ENCODE measurements at regions of chr7 and their contacts with region 1.

Region 1: GRCh38 chr7:99918959-99919813 is at the start of gene TRIM4:
- DNase-seq: peak; percentile 92
- H3K4me3 Mint-ChIP-seq: peak within 1 kb of the TSS; percentile 94
- H3K27ac Mint-ChIP-seq: peak within 1 kb of the TSS; percentile 96
- H3K4me1 Mint-ChIP-seq: peaks cover 44% of the 10 kb centered on the region
- H3K27me3 Mint-ChIP-seq: no peaks in the 10 kb centered on the region
- total RNA-seq, gene TRIM4: 22.1 and 24.1 TPM in 2 replicates

Region 2: DNA sequence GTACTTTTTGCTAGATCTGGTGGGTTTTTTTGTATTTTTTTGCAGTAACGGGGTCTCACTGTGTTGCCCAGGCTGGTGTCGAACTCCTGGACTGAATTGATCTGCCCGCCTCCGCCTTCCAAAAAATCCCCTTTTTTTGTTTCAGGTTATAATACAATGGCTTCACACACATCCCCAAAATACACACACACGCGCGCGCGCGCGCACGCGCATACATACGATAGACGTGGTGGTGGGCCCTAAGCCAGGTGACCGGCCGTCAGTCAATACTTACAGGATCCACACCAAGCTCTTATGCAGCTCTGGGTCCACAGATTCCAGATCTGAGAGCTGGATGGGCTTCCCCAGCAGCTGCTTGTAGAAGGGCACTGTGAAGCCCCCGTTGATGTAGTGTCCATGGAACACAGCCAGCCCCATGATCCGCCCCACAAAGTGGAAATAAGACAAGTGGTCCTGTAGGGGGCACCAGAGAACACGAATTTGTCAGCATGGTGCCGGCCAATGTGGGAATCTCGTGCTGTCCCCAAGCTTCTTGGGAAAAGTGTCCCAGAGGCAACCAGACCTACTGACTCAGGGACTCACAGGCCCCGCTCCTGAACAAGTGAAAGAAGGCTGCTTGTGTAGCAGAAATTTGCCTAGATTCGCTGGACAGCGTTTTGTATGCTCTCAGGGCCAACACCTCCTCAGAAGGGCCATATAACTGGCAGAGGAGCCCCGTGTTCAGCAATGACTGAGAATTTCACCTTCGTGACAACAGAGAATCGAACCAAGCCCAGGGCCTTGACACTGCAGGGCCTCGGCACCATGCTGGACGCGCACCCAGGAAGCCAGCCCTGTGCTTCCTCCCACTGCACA is 878.9 kb before region 1 on chr7:
- intact Hi-C with region 1: no loop called
- DNase-seq: peak; percentile 38
- H3K4me3 Mint-ChIP-seq: no peak overlapping the region
- H3K27ac Mint-ChIP-seq: peak overlapping the region; percentile 58
- H3K4me1 Mint-ChIP-seq: peaks cover 4% of the 10 kb centered on the region
- H3K27me3 Mint-ChIP-seq: no peaks in the 10 kb centered on the region

Region 3: DNA sequence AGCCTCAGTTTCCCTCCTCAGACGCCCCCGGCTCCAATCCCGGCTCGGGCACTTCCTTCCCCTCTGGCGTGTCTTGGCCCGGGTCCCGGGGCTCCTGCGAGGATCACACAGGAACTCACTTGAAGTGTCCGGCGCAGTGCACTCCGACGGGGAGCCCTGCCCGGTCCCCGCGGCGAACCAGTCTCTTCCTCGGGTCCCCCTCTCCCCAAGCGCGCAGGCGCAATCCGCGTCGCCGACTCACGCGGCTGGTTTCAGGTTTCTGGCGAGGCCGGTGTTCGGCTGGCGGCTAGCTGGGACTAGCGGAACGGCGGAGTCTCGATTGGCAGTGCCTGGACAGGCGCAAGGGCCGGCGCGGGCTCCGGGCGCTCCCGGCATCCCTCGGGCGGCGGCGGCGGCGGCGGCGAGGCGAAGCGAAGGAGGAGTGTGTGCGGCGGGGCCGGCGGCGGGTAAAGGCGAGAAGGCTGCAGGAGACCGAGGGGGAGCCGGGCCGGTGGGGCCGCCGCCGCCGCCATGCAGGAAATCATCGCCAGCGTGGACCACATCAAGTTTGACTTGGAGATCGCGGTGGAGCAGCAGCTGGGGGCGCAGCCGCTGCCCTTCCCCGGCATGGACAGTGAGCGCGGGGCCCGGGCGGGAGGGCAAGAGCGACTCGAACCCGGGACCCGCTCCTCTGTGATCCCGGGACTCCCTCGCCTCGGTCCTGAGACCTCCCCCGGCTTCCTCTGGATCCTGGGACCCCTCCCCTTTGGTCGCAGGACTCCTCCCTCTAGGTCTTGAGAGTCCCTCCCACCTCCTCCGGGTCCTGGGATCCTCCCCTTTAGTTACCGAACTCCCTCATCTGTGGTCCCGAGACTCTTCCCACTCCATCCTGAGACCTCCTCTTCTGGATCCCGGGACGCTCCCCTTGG is 480.4 kb before region 1 on chr7 and contains the starts of genes CPSF4 and PTCD1:
- intact Hi-C with region 1: loop called (anchors 1 kb)
- DNase-seq: peak; percentile 91
- H3K4me3 Mint-ChIP-seq: peak within 1 kb of the TSS; percentile 98
- H3K27ac Mint-ChIP-seq: peak within 1 kb of the TSS; percentile 88
- H3K4me1 Mint-ChIP-seq: peaks cover 28% of the 10 kb centered on the region
- H3K27me3 Mint-ChIP-seq: no peaks in the 10 kb centered on the region
- total RNA-seq, gene CPSF4: 92.3 and 93.2 TPM in 2 replicates
- total RNA-seq, gene PTCD1: 13.7 and 16.0 TPM in 2 replicates

Region 4: GRCh38 chr7:99504603-99505323 is 414.4 kb before region 1 on chr7 and contains the start of gene ZKSCAN5:
- intact Hi-C with region 1: loop called (anchors 1 kb)
- DNase-seq: peak; percentile 96
- H3K4me3 Mint-ChIP-seq: peak within 1 kb of the TSS; percentile 90
- H3K27ac Mint-ChIP-seq: peak within 1 kb of the TSS; percentile 96
- H3K4me1 Mint-ChIP-seq: peaks cover 19% of the 10 kb centered on the region
- H3K27me3 Mint-ChIP-seq: no peaks in the 10 kb centered on the region
- total RNA-seq, gene ZKSCAN5: 8.0 and 8.1 TPM in 2 replicates

Region 5: GRCh38 chr7:99624484-99624883 is 294.7 kb before region 1 on chr7:
- intact Hi-C with region 1: loop called (anchors 2 kb)
- DNase-seq: peak; percentile 64
- H3K4me3 Mint-ChIP-seq: peak overlapping the region; percentile 85
- H3K27ac Mint-ChIP-seq: peak overlapping the region; percentile 98
- H3K4me1 Mint-ChIP-seq: peaks cover 61% of the 10 kb centered on the region
- H3K27me3 Mint-ChIP-seq: peaks cover 2% of the 10 kb centered on the region

Region 6: DNA sequence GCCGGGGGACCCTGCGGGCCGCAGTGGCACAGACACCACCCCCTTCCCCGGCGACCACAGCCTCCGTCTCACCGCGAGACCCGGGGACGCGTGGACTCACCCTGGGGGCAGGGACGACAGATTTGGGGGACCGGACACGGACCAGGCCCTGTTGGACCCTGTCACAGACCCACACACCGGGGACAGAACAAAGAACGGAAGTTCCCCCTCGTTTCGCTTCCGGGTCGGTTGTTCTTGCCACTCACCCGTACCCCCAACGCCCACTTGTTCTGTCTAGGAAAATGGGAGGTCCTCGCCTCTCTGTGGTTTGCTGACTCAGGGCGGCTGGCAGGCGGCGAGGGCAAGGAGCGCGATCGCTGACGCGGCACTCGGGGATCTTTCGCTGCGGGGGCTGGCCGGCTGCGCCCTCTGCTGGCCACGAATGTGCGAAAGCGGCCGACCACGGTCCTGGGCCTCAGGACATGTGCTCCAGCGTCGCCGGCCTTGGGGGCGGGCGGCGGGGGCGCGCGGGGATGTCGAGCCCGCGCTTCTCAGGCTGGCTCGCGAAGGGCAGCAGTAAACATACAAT is 162.4 kb after region 1 on chr7 and contains the start of gene ZNF3:
- intact Hi-C with region 1: loop called (anchors 1 kb)
- DNase-seq: peak; percentile 98
- H3K4me3 Mint-ChIP-seq: peak within 1 kb of the TSS; percentile 89
- H3K27ac Mint-ChIP-seq: peak within 1 kb of the TSS; percentile 92
- H3K4me1 Mint-ChIP-seq: peaks cover 31% of the 10 kb centered on the region
- H3K27me3 Mint-ChIP-seq: peaks cover 4% of the 10 kb centered on the region
- total RNA-seq, gene ZNF3: 24.6 and 26.1 TPM in 2 replicates

Region 7: GRCh38 chr7:100119062-100119700 is 200.0 kb after region 1 on chr7 and contains the starts of genes CNPY4 and TAF6:
- intact Hi-C with region 1: loop called (anchors 2 kb)
- DNase-seq: peak; percentile 90
- H3K4me3 Mint-ChIP-seq: peak within 1 kb of the TSS; percentile 98
- H3K27ac Mint-ChIP-seq: peak within 1 kb of the TSS; percentile 97
- H3K4me1 Mint-ChIP-seq: peaks cover 16% of the 10 kb centered on the region
- H3K27me3 Mint-ChIP-seq: no peaks in the 10 kb centered on the region
- total RNA-seq, gene CNPY4: 19.6 and 21.7 TPM in 2 replicates
- total RNA-seq, gene TAF6: 72.9 and 79.2 TPM in 2 replicates

Region 8: DNA sequence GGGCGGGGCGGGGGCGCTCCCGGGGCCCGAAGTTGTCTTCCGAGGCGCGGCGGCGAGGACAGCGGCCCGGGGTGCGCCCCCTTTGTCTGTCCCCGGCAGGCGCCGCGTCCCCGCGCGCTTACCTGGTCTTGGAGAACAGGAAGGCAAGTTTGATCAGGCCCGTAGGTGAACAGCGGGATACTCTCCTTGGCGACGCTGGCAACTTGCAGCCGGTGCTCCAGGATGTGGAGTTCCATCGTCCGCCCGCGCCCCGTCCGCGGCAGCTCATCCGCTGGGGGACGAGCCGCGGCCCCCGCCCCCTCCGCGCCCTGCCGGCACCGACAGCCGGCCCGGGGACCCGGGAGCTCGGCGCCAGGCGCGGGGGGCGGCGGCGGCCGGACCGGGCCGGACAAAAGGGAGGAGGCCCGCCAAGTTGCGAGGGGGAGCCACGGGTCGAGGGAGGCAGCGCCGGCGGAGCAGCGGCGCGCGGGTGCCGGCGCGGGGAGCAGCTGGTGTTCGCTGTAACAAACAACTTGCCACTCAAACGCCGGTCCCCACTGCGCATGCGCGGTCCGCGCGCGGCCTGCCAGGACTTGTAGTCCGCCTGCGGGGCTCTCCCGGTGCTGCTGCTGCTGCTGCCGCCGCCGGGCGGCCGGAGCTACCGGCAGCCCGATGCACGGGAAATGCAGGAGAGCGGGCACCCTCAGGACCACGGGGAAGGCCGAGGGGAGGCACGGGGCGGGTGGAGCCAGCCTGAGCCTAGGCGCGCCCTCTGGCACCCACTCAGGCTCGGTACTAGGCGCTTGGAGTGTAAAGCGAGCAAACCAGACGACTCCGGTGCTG is 352.7 kb after region 1 on chr7:
- intact Hi-C with region 1: loop called (anchors 2 kb)
- DNase-seq: peak; percentile 98
- H3K4me3 Mint-ChIP-seq: peak overlapping the region; percentile 77
- H3K27ac Mint-ChIP-seq: peak overlapping the region; percentile 55
- H3K4me1 Mint-ChIP-seq: peaks cover 14% of the 10 kb centered on the region
- H3K27me3 Mint-ChIP-seq: peaks cover 2% of the 10 kb centered on the region

Measured in activated T-helper 1 cell treated with anti-CD3 and anti-CD28 coated beads, Interleukin-12 subunit alpha, Interleukin-12 subunit beta, Interleukin-2, Interleukin-4 antibody, amounts not matched to agents 30 ng/mL and 10 ng/mL and 1 ng/mL, durations not matched to agents 14 hours and 24 hours and 36 hours (primary cell).